WTC11 (cell line): ENCODE measurements at regions of chr10 and their contacts with region 1.

Region 1: DNA sequence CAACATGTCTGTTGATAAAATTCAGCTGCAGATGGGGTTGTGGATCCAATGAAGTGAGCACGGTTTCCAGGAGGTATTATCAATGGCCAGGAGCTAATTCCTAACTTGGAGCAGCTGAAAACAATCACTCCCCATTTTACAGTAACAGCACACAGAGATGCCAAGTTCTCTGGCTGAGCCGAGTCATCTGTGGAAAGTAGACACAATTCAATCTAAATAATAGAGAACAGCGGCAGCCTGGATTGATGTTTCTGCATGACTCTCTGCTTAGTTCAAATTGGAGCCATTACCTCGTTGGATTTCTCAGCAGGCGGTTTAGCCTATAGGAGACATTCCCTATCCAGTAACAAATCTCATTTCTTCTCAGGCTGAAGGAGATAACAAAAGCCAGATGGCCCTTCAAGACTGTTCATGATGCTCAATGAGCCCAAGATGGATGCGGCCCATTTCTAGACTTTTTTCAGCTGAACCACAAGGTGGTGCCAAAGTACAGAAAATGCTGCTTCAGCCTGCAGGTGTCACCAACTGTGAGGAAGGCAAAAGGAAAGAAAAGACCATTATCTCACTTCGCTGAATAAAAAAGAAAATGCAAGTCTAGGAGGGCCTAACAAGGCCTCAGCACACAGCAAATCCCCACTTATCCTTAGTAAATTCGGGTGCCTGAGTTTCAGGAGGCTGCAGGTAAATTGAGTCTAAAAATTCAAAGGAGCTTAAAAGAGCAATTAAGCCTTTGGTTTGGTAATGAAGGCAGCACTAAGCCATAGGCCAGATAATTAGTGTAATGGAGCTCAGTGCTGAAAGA is 83.7 kb downstream of the SLC16A9 start:
- DNase-seq: peak; percentile 22
- ATAC-seq: peak; percentile 85
- H3K4me3 Mint-ChIP-seq: no peak overlapping the region; the same call in 1 of the 2 replicates
- H3K27ac Mint-ChIP-seq: peak overlapping the region; percentile 91
- H3K4me1 Mint-ChIP-seq: peaks cover 18% of the 10 kb centered on the region
- H3K27me3 Mint-ChIP-seq: no peaks in the 10 kb centered on the region
- CTCF ChIP-seq: peak; percentile 72

Region 2: GRCh38 chr10:59557052-59557451 is 68.9 kb before region 1 on chr10:
- CTCF ChIA-PET with region 1: no interaction called
- POLR2A ChIA-PET with region 1: no interaction called
- DNase-seq: peak; percentile 66
- ATAC-seq: no peak
- H3K4me3 Mint-ChIP-seq: peak overlapping the region; percentile 0; the same call in 1 of the 2 replicates
- H3K27ac Mint-ChIP-seq: 0 out of 2 replicates have a peak overlapping the region, but pooled peaks have one; percentile 45
- H3K4me1 Mint-ChIP-seq: peaks cover 29% of the 10 kb centered on the region
- H3K27me3 Mint-ChIP-seq: no peaks in the 10 kb centered on the region
- CTCF ChIP-seq: no peak

Region 3: DNA sequence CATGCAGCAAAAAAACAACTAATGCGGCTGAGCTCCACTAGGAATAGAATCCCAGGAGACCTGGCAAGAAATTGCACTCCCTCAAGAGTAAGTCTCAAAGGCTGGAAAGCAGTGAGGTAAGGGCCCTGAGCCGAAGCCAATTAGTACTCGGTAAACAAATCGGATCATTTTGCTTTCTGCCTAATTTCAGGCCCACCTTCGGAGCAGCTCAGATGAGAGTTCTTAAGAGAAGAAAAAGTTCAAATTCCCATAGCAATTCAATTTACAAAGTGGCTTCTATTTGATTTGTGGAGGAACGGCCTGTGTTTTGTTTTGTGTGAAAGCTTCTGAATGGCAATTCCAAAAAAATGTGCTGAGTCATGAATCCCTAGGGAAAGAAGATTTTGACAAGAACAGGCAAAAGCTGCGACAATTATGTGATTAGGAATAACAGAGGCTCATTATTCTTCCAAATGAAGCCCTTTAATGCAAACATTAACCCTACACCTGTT is 22.8 kb after region 1 on chr10:
- CTCF ChIA-PET with region 1: no interaction called
- POLR2A ChIA-PET with region 1: no interaction called
- DNase-seq: no peak
- ATAC-seq: no peak
- H3K4me3 Mint-ChIP-seq: no peak overlapping the region
- H3K27ac Mint-ChIP-seq: no peak overlapping the region; the same call in 1 of the 2 replicates
- H3K4me1 Mint-ChIP-seq: peaks cover 12% of the 10 kb centered on the region
- H3K27me3 Mint-ChIP-seq: no peaks in the 10 kb centered on the region
- CTCF ChIP-seq: no peak

Region 4: DNA sequence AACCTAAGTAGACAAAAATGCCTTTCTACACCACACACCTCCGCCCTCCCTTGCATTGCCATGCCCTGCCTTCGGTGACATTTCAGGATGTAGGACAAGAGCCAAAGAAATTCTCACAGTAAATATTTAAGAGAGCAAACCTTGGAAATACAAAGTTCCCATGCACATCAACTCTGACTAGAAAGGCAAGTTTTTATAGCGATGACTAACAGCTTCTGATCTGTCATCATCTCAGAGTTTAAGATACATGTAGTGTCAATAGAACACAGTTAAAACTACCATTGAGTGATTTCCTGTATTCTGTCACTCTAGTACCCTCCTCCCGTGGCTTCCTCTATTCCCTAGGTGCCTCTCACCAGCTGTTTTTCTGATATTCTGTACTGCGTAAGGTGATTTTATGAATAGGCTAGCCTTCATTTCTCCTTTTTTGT is 63.0 kb after region 1 on chr10:
- CTCF ChIA-PET with region 1: no interaction called
- POLR2A ChIA-PET with region 1: no interaction called
- DNase-seq: no peak
- ATAC-seq: no peak
- H3K4me3 Mint-ChIP-seq: no peak overlapping the region
- H3K27ac Mint-ChIP-seq: no peak overlapping the region
- H3K4me1 Mint-ChIP-seq: peaks cover 4% of the 10 kb centered on the region
- H3K27me3 Mint-ChIP-seq: no peaks in the 10 kb centered on the region
- CTCF ChIP-seq: no peak

Region 5: GRCh38 chr10:59700709-59701108 is 74.8 kb after region 1 on chr10:
- CTCF ChIA-PET with region 1: interaction called, 15 read pairs
- POLR2A ChIA-PET with region 1: no interaction called
- DNase-seq: peak; percentile 23
- ATAC-seq: peak; percentile 99
- H3K4me3 Mint-ChIP-seq: no peak overlapping the region
- H3K27ac Mint-ChIP-seq: no peak overlapping the region
- H3K4me1 Mint-ChIP-seq: peaks cover 9% of the 10 kb centered on the region
- H3K27me3 Mint-ChIP-seq: no peaks in the 10 kb centered on the region
- CTCF ChIP-seq: no peak

Region 6: GRCh38 chr10:59808896-59809643 is 183.1 kb after region 1 on chr10:
- CTCF ChIA-PET with region 1: interaction called, 12 read pairs
- POLR2A ChIA-PET with region 1: no interaction called
- DNase-seq: peak; percentile 74
- ATAC-seq: peak; percentile 76
- H3K4me3 Mint-ChIP-seq: no peak overlapping the region
- H3K27ac Mint-ChIP-seq: no peak overlapping the region
- H3K4me1 Mint-ChIP-seq: peaks cover 22% of the 10 kb centered on the region
- H3K27me3 Mint-ChIP-seq: no peaks in the 10 kb centered on the region; the same call in 1 of the 2 replicates
- CTCF ChIP-seq: peak; percentile 62